CD8-positive, alpha-beta T cell (primary cell): ENCODE measurements at regions of chr15 and their contacts with region 1.

Region 1: DNA sequence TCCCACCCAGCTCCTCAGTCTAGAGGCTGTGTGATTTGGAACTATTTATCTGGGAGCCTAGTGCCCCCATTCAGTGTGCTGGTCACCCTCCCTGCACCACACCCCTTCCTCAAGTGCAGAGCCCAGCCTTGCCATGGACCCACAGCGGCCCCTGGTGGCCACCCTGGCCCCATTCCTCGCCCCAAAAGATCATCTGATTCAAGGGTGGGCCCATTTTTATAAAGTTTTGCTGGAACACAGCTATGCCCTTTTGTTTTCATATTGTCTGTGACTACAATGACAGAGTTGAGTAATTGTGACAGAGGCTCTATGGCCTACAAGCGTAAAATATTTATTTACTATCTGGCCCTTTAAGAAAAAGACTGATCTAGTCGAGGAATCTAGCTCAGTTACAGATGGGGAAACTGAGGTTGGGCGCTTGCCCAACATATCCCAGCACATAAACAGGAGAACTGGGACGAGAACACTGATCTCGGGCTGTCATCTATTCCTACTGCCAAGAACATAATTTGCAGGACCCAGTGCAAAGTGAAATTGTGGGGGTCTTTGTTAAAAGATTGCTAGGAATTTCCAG is 1.8 kb downstream of the FES start:
- DNase-seq: peak; percentile 59 to 88 (median 78)
- ATAC-seq: peak; percentile 57
- H3K4me3 ChIP-seq: no peak overlapping the region
- H3K4me3 Mint-ChIP-seq: no peak overlapping the region
- H3K27ac ChIP-seq: no peak overlapping the region
- H3K27ac Mint-ChIP-seq: no peak overlapping the region
- H3K4me1 ChIP-seq: peaks cover 10% of the 10 kb centered on the region
- H3K4me1 Mint-ChIP-seq: peaks cover 7% of the 10 kb centered on the region
- H3K27me3 ChIP-seq: peaks cover 0 to 3% of the 10 kb centered on the region in 2 experiments
- H3K27me3 Mint-ChIP-seq: peaks cover 8% of the 10 kb centered on the region
- CTCF ChIP-seq: peak; percentile 98

Region 2: GRCh38 chr15:90497912-90498311 is 388.2 kb before region 1 on chr15:
- CTCF ChIA-PET with region 1: no interaction called
- POLR2A ChIA-PET with region 1: no interaction called
- intact Hi-C with region 1: loop called in 1 of 2 experiments (anchors 10 kb)
- DNase-seq: no peak
- ATAC-seq: no peak
- H3K4me3 ChIP-seq: no peak overlapping the region
- H3K4me3 Mint-ChIP-seq: no peak overlapping the region
- H3K27ac ChIP-seq: no peak overlapping the region
- H3K27ac Mint-ChIP-seq: no peak overlapping the region
- H3K4me1 ChIP-seq: peaks cover 16% of the 10 kb centered on the region
- H3K4me1 Mint-ChIP-seq: peaks cover 15% of the 10 kb centered on the region
- H3K27me3 ChIP-seq: no peaks in the 10 kb centered on the region
- H3K27me3 Mint-ChIP-seq: no peaks in the 10 kb centered on the region
- CTCF ChIP-seq: no peak

Region 3: GRCh38 chr15:90648137-90649070 is 237.7 kb before region 1 on chr15:
- CTCF ChIA-PET with region 1: interaction called, 95 read pairs
- POLR2A ChIA-PET with region 1: interaction called, 4 read pairs
- intact Hi-C with region 1: loop called (anchors 1 kb)
- DNase-seq: peak in 8 of 9 experiments; percentile 33 to 81 (median 62)
- ATAC-seq: peak; percentile 89
- H3K4me3 ChIP-seq: no peak overlapping the region
- H3K4me3 Mint-ChIP-seq: peak overlapping the region; percentile 12
- H3K27ac ChIP-seq: no peak overlapping the region
- H3K27ac Mint-ChIP-seq: no peak overlapping the region
- H3K4me1 ChIP-seq: peaks cover 24% of the 10 kb centered on the region
- H3K4me1 Mint-ChIP-seq: peaks cover 20% of the 10 kb centered on the region
- H3K27me3 ChIP-seq: no peaks in the 10 kb centered on the region
- H3K27me3 Mint-ChIP-seq: no peaks in the 10 kb centered on the region
- CTCF ChIP-seq: peak; percentile 94

Region 4: GRCh38 chr15:90691982-90692773 is 193.9 kb before region 1 on chr15:
- CTCF ChIA-PET with region 1: interaction called, 5 read pairs
- POLR2A ChIA-PET with region 1: no interaction called
- intact Hi-C with region 1: loop called in 1 of 2 experiments (anchors 1 kb)
- DNase-seq: no peak
- ATAC-seq: no peak
- H3K4me3 ChIP-seq: no peak overlapping the region
- H3K4me3 Mint-ChIP-seq: no peak overlapping the region
- H3K27ac ChIP-seq: no peak overlapping the region
- H3K27ac Mint-ChIP-seq: no peak overlapping the region
- H3K4me1 ChIP-seq: peaks cover 3% of the 10 kb centered on the region
- H3K4me1 Mint-ChIP-seq: peaks cover 13% of the 10 kb centered on the region
- H3K27me3 ChIP-seq: no peaks in the 10 kb centered on the region
- H3K27me3 Mint-ChIP-seq: no peaks in the 10 kb centered on the region
- CTCF ChIP-seq: no peak

Region 5: DNA sequence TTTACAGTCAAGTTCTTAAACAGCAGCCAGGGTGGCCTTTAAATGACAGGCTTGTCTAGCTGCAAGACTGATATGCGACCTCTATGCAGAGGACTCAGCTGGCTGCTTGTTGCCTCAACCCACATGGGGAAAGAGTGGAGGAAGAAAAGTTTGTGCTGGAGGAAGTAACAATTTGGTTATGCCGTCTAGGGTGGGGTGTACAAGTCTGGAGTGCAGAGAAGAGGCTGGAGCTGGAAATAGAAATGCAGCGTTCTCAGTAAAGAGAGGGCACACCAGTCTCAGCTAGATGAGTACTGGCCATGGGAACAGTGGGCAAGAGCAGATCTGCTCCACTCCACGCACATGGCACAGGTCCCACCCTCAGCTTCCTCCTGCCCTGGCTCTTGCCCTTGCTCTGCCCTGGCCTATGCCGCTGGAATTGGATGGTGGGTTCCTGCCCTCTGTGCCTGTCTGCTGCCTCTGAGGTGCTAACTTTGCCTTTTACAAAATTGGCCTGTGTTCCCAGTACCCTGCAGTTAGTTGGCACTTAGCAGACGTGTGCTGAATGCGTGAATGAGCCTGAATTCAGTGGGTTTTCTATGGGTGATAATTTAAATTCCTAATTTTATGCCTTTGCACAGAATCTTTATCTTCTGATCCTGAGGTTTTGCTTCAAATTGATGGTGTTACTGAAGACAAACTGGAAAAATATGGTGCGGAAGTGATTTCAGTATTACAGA is 77.5 kb before region 1 on chr15:
- CTCF ChIA-PET with region 1: interaction called, 28 read pairs
- POLR2A ChIA-PET with region 1: no interaction called
- intact Hi-C with region 1: no loop called
- DNase-seq: no peak
- ATAC-seq: no peak
- H3K4me3 ChIP-seq: no peak overlapping the region
- H3K4me3 Mint-ChIP-seq: no peak overlapping the region
- H3K27ac ChIP-seq: no peak overlapping the region
- H3K27ac Mint-ChIP-seq: no peak overlapping the region
- H3K4me1 ChIP-seq: no peaks in the 10 kb centered on the region
- H3K4me1 Mint-ChIP-seq: peaks cover 18% of the 10 kb centered on the region
- H3K27me3 ChIP-seq: no peaks in the 10 kb centered on the region
- H3K27me3 Mint-ChIP-seq: no peaks in the 10 kb centered on the region
- CTCF ChIP-seq: no peak

Region 6: GRCh38 chr15:90839187-90840071 is 46.7 kb before region 1 on chr15:
- CTCF ChIA-PET with region 1: interaction called, 19 read pairs
- POLR2A ChIA-PET with region 1: interaction called, 3 read pairs
- intact Hi-C with region 1: no loop called
- DNase-seq: peak in 1 of 9 experiments; percentile 44
- ATAC-seq: no peak
- H3K4me3 ChIP-seq: peak overlapping the region in 1 of 2 experiments; percentile 14
- H3K4me3 Mint-ChIP-seq: peak overlapping the region; percentile 43
- H3K27ac ChIP-seq: no peak overlapping the region
- H3K27ac Mint-ChIP-seq: peak overlapping the region; percentile 77
- H3K4me1 ChIP-seq: peaks cover 39% of the 10 kb centered on the region
- H3K4me1 Mint-ChIP-seq: peaks cover 30% of the 10 kb centered on the region
- H3K27me3 ChIP-seq: no peaks in the 10 kb centered on the region
- H3K27me3 Mint-ChIP-seq: no peaks in the 10 kb centered on the region
- CTCF ChIP-seq: no peak